GM12878 (cell line): ENCODE measurements at regions of chr6 and their contacts with region 1.

Region 1: DNA sequence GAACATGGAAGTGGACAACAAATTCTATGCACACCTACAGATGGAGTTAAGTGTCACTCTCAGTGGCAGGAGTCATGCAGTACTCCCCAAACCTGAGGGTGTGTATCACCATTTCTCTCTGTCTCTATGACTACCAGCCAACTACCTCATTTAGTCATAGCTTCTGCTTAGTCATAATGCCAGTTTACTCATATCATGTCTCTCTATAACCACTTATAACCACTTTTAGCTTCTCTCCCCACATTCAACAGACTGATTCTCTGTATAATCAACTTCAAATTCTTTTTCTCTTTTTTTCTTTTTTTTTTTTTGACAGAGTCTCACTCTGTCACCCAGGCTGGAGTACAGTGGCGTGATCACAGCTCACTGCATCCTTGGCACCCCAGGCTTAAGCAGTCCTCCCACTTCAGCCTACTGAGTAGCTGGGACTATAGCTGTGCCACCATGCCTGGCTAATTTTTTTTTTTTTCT is 13.8 kb upstream of the GTF3C6 start:
- DNase-seq: peak; percentile 94
- ATAC-seq: peak; percentile 99
- H3K4me3 ChIP-seq: peak overlapping the region; percentile 9; the same call in 1 of the 2 replicates
- H3K27ac ChIP-seq: peak overlapping the region; percentile 22; the same call in 1 of the 2 replicates
- H3K4me1 ChIP-seq: peaks cover 10% of the 10 kb centered on the region
- H3K27me3 ChIP-seq: no peaks in the 10 kb centered on the region
- CTCF ChIP-seq: no peak
- EP300 ChIP-seq: peak; percentile 99
- POLR2A ChIP-seq: no peak
- RAD21 ChIP-seq: no peak

Region 2: DNA sequence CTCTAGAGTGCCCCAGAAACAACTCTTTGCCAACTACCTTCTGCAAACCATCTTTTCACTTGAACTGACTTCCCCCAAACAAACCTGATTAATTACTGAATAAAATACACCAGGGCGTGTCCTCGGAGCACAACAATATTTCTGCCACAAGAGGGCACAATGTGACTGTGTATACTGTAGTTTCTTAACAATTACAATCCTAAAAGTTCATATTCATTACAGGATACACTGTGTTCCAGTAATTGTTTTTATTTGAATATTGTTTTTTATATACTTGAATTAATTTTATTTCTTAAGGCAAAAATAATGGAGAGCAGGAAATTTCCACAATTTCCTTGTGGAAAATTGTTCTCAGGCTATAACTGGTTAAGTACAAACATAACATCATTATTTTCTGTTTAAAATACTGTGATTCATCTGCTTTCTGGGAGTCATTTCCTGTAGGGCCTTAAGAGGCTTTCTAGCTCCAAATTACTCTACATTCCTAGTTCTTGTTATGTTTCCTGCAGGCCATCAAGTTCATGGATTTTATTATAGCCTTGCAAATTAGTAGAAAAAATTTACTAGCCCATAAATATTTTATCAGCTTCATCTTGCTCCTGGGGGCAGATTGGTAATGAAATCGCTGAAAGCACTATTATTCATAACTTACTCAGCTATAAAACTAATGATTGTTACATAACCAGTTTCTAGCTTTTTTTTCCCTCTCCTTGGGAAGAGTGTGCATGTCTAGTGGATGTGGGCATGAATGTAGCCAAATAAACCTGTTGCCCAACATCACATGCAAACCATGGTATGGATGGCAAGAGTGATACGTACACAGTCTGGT is 416.4 kb before region 1 on chr6:
- CTCF ChIA-PET with region 1: interaction called, 28 read pairs
- POLR2A ChIA-PET with region 1: no interaction called
- RAD21 ChIA-PET with region 1: interaction called, 5 read pairs
- SMC1A ChIA-PET with region 1: interaction called, 13 read pairs
- in situ Hi-C with region 1: loop called (anchors 5 kb)
- intact Hi-C with region 1: loop called (anchors 1 kb)
- DNase-seq: peak; percentile 28
- ATAC-seq: peak; percentile 89
- H3K4me3 ChIP-seq: no peak overlapping the region
- H3K27ac ChIP-seq: no peak overlapping the region
- H3K4me1 ChIP-seq: no peaks in the 10 kb centered on the region
- H3K27me3 ChIP-seq: peaks cover 0 to 1% of the 10 kb centered on the region in 2 experiments; a peak in 2 of 4 replicates
- CTCF ChIP-seq: peak; percentile 47 to 88 (median 73); a peak in 5 of 6 replicates
- EP300 ChIP-seq: no peak
- POLR2A ChIP-seq: no peak
- RAD21 ChIP-seq: peak; percentile 93

Region 3: DNA sequence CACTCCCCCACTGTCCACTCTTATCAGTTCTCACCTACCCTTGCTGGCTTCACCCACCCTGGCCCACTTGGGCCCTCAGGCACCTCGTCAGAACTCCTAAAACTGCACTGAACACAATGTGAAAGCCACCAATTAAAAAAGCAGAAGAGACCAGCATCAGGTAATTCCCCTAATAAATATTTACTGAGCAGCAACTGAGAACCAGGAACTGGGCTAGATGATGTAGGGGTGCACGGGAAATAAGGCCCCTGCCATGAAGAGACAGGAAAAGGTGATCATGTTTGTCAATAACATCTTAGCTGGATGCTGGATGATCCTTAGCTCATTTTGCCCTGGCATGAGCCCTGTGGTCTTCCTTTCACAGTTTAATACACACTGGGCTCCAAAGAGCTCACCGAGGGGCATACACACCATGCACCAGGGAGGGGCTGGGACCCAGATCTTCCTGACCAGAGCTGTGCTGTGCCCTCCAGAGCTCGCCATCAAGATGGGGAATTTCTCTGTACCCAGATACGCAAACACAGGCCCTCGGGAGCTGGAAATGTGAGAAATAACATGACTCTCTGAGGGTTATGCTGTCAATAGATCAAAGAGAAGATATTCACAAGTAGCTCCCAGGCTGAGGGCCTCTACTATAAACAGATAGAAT is 354.7 kb before region 1 on chr6:
- CTCF ChIA-PET with region 1: interaction called, 3 read pairs
- POLR2A ChIA-PET with region 1: interaction called, 4 read pairs
- RAD21 ChIA-PET with region 1: interaction called, 3 read pairs
- SMC1A ChIA-PET with region 1: interaction called, 11 read pairs
- in situ Hi-C with region 1: no loop called
- intact Hi-C with region 1: no loop called
- DNase-seq: peak; percentile 56
- ATAC-seq: peak; percentile 92
- H3K4me3 ChIP-seq: no peak overlapping the region
- H3K27ac ChIP-seq: peak overlapping the region; percentile 29
- H3K4me1 ChIP-seq: peaks cover 20% of the 10 kb centered on the region
- H3K27me3 ChIP-seq: no peaks in the 10 kb centered on the region
- CTCF ChIP-seq: no peak
- EP300 ChIP-seq: no peak; a peak in 2 of 4 replicates
- POLR2A ChIP-seq: no peak
- RAD21 ChIP-seq: no peak

Region 4: GRCh38 chr6:110784610-110784979 is 160.1 kb before region 1 on chr6:
- CTCF ChIA-PET with region 1: interaction called, 3 read pairs
- POLR2A ChIA-PET with region 1: no interaction called
- RAD21 ChIA-PET with region 1: interaction called, 5 read pairs
- SMC1A ChIA-PET with region 1: no interaction called
- in situ Hi-C with region 1: no loop called
- intact Hi-C with region 1: loop called (anchors 10 kb)
- DNase-seq: no peak
- ATAC-seq: peak; percentile 59
- H3K4me3 ChIP-seq: no peak overlapping the region
- H3K27ac ChIP-seq: no peak overlapping the region
- H3K4me1 ChIP-seq: peaks cover 36% of the 10 kb centered on the region
- H3K27me3 ChIP-seq: no peaks in the 10 kb centered on the region
- CTCF ChIP-seq: no peak
- EP300 ChIP-seq: no peak
- POLR2A ChIP-seq: no peak
- RAD21 ChIP-seq: no peak

Region 5: GRCh38 chr6:110873981-110874879 is 70.5 kb before region 1 on chr6 and contains the start of gene AMD1:
- CTCF ChIA-PET with region 1: interaction called, 15 read pairs
- POLR2A ChIA-PET with region 1: interaction called, 6 read pairs
- RAD21 ChIA-PET with region 1: interaction called, 9 read pairs
- SMC1A ChIA-PET with region 1: interaction called, 35 read pairs
- in situ Hi-C with region 1: no loop called
- intact Hi-C with region 1: loop called (anchors 2 kb)
- DNase-seq: peak; percentile 85
- ATAC-seq: peak; percentile 73
- H3K4me3 ChIP-seq: peak within 1 kb of the TSS; percentile 94
- H3K27ac ChIP-seq: peak within 1 kb of the TSS; percentile 93
- H3K4me1 ChIP-seq: peaks cover 16% of the 10 kb centered on the region
- H3K27me3 ChIP-seq: no peaks in the 10 kb centered on the region
- CTCF ChIP-seq: no peak
- EP300 ChIP-seq: no peak
- POLR2A ChIP-seq: peak; percentile 98
- RAD21 ChIP-seq: no peak
- polyA plus RNA-seq, gene AMD1: 59.6 to 75.5 TPM